AG04449 (cell line): ENCODE measurements at regions of chr10 and their contacts with region 1.

Region 1: DNA sequence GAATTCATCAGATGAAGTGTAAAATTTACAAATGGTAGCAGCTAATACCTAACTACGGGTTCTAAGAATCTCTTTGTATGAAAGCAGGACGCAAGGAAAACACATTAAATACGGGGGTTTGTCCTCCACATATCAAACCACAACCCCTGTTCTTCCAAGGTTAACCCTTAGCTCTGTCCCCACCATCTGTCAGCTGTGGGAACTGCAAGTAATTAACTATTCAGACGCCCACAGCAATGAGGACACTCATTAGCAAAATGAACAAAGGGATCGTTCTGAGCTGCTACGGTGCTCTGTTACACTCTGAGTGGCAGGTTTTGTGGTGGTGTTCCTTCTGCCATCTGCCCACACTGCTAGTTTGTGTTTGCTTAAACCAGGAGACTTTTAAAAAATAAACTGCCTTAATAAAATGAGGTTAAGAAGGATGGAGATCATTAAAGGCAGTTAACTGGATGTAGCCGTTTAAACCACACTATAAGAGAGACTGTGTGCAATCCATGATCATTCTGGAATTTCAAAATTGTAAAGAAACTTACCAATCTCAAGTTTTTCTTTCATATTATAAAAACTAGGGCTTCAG is 51.4 kb downstream of the C10orf67 start:
- DNase-seq: no peak
- H3K4me3 ChIP-seq: no peak overlapping the region
- CTCF ChIP-seq: peak; percentile 44

Region 2: DNA sequence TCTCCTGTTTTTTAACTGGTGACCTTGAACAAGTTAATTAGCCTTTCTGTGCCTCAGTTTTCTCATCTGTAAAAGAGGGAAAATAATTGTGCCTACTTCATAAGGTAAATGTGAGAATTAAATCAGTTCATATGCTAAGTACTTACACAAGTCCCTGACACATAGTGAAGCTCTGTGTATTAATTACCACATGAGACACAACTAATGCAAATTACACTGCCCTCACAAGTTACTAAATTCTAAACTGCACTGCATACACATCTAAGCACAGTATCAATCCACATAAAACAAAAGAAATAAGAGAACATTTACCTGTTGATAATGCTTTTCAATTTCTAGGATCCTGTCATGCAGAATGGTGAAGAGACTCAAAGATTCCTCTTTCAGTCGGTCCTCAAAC is 28.8 kb after region 1 on chr10:
- CTCF ChIA-PET with region 1: no interaction called
- POLR2A ChIA-PET with region 1: no interaction called
- DNase-seq: no peak
- H3K4me3 ChIP-seq: no peak overlapping the region
- CTCF ChIP-seq: no peak

Region 3: DNA sequence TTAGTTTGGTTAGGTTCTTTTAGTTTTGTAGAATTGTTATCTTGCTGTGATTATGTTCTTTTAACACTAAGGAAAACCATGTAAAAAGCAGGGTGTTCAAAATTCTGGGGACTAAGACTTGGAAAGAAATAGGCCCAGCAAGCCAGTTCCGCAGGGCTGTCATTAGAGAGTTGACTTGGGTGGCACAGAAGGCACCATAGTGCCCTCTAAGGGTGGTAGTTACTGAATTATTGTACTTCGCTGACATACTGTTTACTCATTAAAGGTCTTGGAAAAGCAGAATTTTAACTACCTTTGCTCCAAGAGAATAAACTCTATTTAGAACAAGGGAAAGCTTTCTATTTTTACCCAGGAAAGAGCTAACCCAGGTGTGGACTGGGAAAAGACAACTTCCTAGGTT is 232.2 kb after region 1 on chr10:
- CTCF ChIA-PET with region 1: interaction called, 71 read pairs
- POLR2A ChIA-PET with region 1: no interaction called
- DNase-seq: no peak
- H3K4me3 ChIP-seq: no peak overlapping the region
- CTCF ChIP-seq: peak; percentile 14